PC-9 (cell line): ENCODE measurements at regions of chr1 and their contacts with region 1.

Region 1: DNA sequence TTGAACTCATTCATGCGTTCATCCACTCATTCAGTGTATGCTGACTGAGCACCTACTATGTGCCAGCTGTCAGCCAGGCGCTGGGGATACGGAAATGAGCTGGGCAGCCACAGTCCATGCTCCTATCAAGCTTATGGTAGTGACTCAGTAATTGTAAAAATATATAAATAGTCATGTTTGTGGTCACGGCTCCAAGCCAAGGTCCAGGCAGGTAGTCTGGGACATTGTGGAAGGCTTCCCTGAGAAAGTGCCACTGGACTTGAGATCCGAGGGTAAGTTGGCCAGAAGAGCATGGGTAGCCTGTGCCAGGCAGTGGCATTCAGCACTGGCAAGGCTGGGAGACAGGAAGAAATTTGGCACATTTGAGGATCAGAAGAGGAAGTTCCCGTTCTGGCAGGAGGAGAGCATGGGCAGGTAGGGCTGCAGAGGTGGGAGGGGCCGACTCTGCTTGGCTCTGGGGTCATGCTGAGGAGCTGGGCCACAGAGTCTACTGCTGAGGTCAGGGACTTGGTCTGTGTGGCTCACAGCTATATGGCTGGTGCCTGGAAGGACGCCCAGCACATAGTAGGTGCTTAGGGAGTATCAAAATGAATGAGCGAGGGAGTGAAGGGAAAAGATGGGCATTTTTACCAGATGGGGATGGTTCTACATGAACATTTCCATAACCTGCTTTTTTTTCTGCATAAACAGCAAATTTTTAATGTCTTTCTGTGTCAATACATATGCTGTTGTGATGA is 6.9 kb downstream of the PTPRF start:
- DNase-seq: peak; percentile 74 to 76
- H3K4me3 ChIP-seq: no peak overlapping the region
- H3K27ac ChIP-seq: peak overlapping the region; percentile 72
- H3K4me1 ChIP-seq: peaks cover 56% of the 10 kb centered on the region
- H3K27me3 ChIP-seq: no peaks in the 10 kb centered on the region
- CTCF ChIP-seq: no peak

Region 2: GRCh38 chr1:43554444-43554992 is 16.9 kb after region 1 on chr1:
- CTCF ChIA-PET with region 1: interaction called, 6 read pairs
- POLR2A ChIA-PET with region 1: interaction called, 4 read pairs
- intact Hi-C with region 1: loop called (anchors 1 kb)
- DNase-seq: peak in 1 of 2 experiments; percentile 40
- H3K4me3 ChIP-seq: no peak overlapping the region
- H3K27ac ChIP-seq: 0 out of 2 replicates have a peak overlapping the region, but pooled peaks have one; percentile 13
- H3K4me1 ChIP-seq: peaks cover 79% of the 10 kb centered on the region
- H3K27me3 ChIP-seq: no peaks in the 10 kb centered on the region
- CTCF ChIP-seq: peak; percentile 68

Region 3: DNA sequence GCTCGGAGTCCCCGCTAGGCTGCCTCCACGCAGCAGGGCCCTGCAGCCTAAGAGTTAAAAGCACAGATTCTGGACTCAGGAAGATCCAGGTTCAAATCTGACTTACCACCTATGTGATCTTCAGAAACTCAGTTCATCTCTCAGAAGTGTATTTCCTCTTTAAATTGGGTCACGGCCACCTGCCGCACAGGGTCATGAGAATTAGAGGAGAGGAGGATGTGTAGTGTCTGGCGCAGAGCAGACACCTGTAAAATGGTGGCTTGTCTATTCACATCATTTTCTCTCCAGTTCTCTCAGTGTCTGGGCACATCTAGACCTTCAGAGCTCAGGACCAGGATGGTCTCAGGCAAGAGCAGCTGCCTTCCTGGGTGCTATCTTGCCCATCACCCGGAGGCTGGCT is 38.9 kb after region 1 on chr1:
- CTCF ChIA-PET with region 1: no interaction called
- POLR2A ChIA-PET with region 1: no interaction called
- intact Hi-C with region 1: no loop called
- DNase-seq: peak in 1 of 2 experiments; percentile 16
- H3K4me3 ChIP-seq: no peak overlapping the region
- H3K27ac ChIP-seq: no peak overlapping the region
- H3K4me1 ChIP-seq: peaks cover 3% of the 10 kb centered on the region
- H3K27me3 ChIP-seq: no peaks in the 10 kb centered on the region
- CTCF ChIP-seq: no peak

Region 4: GRCh38 chr1:43699281-43699680 is 161.7 kb after region 1 on chr1:
- CTCF ChIA-PET with region 1: no interaction called
- POLR2A ChIA-PET with region 1: no interaction called
- intact Hi-C with region 1: no loop called
- DNase-seq: no peak
- H3K4me3 ChIP-seq: no peak overlapping the region
- H3K27ac ChIP-seq: no peak overlapping the region
- H3K4me1 ChIP-seq: no peaks in the 10 kb centered on the region
- H3K27me3 ChIP-seq: no peaks in the 10 kb centered on the region
- CTCF ChIP-seq: no peak